HepG2 (cell line): ENCODE measurements at regions of chr10 and their contacts with region 1.

Region 1: GRCh38 chr10:70146489-70147258 is at the start of gene TYSND1:
- DNase-seq: peak; percentile 97
- ATAC-seq: peak; percentile 90
- H3K4me3 ChIP-seq: peak within 1 kb of the TSS; percentile 66 to 92 (median 77)
- H3K27ac ChIP-seq: peak within 1 kb of the TSS; percentile 81
- H3K4me1 ChIP-seq: peaks cover 24% of the 10 kb centered on the region
- H3K27me3 ChIP-seq: no peaks in the 10 kb centered on the region
- CTCF ChIP-seq: peak; percentile 97
- EP300 ChIP-seq: no peak; a peak in 1 of 4 replicates
- POLR2A ChIP-seq: peak; percentile 93 to 96
- RAD21 ChIP-seq: peak; percentile 83
- total RNA-seq, gene TYSND1: 6.8 and 8.9 TPM in 2 replicates

Region 2: GRCh38 chr10:70090013-70090412 is 56.7 kb before region 1 on chr10:
- CTCF ChIA-PET with region 1: interaction called, 6 read pairs
- POLR2A ChIA-PET with region 1: interaction called, 27 read pairs
- in situ Hi-C with region 1: no loop called
- intact Hi-C with region 1: no loop called
- DNase-seq: no peak
- ATAC-seq: no peak
- H3K4me3 ChIP-seq: no peak overlapping the region
- H3K27ac ChIP-seq: peak overlapping the region; percentile 79
- H3K4me1 ChIP-seq: peaks cover 97% of the 10 kb centered on the region
- H3K27me3 ChIP-seq: no peaks in the 10 kb centered on the region
- CTCF ChIP-seq: no peak
- EP300 ChIP-seq: no peak
- POLR2A ChIP-seq: no peak
- RAD21 ChIP-seq: no peak

Region 3: DNA sequence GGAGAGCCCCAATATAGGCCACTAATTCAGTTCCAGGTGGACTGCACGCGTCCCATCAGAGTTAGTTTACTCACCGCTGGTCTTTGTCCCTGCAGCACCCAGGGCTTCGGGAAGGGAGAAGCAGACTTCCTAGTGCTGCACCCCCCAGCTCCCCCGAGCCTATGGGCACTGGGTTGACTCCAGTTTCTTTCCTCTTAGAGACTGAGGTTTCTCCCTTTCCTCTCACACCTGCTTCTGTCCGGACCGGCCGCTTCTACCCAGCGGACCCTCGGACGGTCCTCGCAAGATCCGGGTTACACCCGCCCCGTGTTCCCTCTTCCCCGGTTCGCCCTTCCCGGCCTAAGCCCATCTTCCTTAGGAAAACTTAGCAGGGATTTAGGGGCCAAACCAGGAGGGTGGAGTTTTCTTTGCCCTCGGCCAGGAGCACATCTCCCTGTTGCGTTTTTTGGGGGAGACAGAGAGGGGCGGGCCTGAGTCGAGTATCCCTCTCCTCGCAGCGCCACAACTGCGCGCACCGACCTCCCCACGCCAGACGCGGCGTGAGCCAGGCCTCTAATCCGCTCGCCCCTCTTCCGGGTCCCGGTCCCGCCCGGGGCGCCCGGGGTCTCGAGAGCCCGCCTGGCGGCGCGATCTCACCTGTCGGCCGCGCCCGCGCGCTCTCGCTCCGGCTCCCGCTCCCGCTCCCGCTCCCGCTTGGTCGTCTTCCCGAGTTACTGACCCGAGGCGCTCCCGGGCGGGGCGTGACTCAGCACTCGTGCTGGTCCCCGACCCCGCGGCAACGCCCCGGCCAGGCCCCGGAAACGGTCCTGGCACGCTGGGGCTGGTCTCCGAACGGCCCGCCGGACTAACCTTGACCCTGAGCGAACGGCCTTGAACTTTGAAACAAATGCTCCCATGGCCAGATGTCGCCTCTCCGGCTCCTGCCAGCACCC is 14.3 kb before region 1 on chr10 and contains the start of gene AIFM2:
- CTCF ChIA-PET with region 1: interaction called, 5 read pairs
- POLR2A ChIA-PET with region 1: interaction called, 109 read pairs
- in situ Hi-C with region 1: no loop called
- intact Hi-C with region 1: loop called (anchors 1 kb)
- DNase-seq: peak; percentile 80
- ATAC-seq: peak; percentile 81
- H3K4me3 ChIP-seq: peak within 1 kb of the TSS; percentile 77 to 97 (median 94)
- H3K27ac ChIP-seq: peak within 1 kb of the TSS; percentile 97
- H3K4me1 ChIP-seq: peaks cover 62% of the 10 kb centered on the region
- H3K27me3 ChIP-seq: no peaks in the 10 kb centered on the region; a peak in 1 of 5 replicates
- CTCF ChIP-seq: no peak; the same call in none of the 2 replicates
- EP300 ChIP-seq: peak in 1 of 2 experiments; percentile 78; a peak in 2 of 4 replicates
- POLR2A ChIP-seq: peak; percentile 53 to 71; a peak in 3 of 4 replicates
- RAD21 ChIP-seq: peak; percentile 53
- total RNA-seq, gene AIFM2: 20.3 and 29.6 TPM in 2 replicates

Region 4: DNA sequence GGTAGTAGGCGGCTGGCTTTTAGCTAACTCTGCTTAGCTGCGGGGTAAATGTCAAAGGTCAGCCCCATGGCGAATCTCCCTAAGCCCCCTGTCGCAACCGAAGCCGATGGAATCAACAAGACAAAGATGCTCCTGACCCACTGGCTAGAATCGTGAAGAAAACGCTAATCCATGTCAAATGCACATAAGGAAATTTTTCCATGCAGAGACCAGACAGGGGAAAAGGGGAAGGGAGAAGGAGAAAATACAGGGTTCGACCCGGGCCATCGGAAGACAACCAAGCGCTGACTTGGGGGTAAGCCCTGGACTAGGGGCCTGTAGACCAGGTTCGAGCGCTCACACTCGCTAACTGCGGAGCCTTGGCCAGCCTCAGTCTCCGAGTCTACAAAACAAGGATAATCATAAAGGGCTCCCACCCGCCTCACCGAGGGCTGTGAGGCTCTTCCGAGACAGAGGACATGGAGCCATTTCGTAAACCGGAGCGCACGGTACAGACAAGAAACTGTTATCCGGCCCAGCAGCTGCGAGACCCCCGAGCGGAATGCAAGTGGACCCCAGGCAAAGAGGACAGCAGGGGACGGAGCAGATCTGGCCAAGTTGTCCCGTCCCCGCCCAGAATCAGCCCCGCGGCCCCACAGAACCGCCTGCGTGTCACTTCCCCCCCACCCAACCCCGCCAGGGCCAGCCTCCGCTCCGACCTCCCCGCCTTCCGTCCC is 23.1 kb after region 1 on chr10:
- CTCF ChIA-PET with region 1: no interaction called
- POLR2A ChIA-PET with region 1: interaction called, 84 read pairs
- in situ Hi-C with region 1: no loop called
- intact Hi-C with region 1: no loop called
- DNase-seq: no peak
- ATAC-seq: peak; percentile 5
- H3K4me3 ChIP-seq: peak overlapping the region; percentile 82 to 90 (median 90)
- H3K27ac ChIP-seq: peak overlapping the region; percentile 80
- H3K4me1 ChIP-seq: peaks cover 69% of the 10 kb centered on the region
- H3K27me3 ChIP-seq: no peaks in the 10 kb centered on the region; a peak in 1 of 5 replicates
- CTCF ChIP-seq: no peak
- EP300 ChIP-seq: no peak
- POLR2A ChIP-seq: no peak; a peak in 1 of 4 replicates
- RAD21 ChIP-seq: no peak

Region 5: DNA sequence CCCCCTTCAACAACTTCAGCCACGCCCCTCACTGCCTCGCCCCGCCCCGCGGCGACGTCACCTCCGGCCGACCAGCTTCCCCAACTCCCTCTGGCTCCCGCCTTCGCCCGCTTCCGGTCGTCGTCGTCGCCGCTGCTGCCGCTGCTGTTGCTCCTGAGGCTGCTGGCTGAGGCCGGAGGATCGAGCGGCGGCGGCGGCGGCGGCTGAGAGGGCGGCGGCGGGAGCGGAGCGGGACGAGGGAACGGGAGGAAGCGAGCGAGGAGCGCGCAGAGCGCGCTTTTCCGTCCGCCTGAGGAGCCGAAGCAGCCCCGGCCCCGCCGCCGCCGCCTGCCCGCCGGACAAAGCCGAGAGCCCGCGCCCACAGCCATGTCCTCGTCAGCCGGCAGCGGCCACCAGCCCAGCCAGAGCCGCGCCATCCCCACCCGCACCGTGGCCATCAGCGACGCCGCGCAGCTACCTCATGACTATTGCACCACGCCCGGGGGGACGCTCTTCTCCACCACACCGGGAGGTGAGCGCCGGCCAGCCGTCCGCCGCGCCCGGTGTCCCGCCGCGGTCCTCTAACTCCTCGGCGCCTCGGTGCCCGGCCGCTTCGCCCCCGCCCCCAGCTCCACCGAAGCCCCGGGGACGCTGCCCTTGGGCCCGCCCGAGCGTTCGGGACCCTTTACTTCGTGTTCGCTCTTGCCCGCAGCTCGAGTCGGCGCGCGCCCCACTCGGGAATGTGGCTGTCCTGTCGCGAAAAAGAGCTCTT is 257.5 kb after region 1 on chr10 and contains the start of gene EIF4EBP2:
- CTCF ChIA-PET with region 1: no interaction called
- POLR2A ChIA-PET with region 1: interaction called, 15 read pairs
- in situ Hi-C with region 1: no loop called
- intact Hi-C with region 1: no loop called
- DNase-seq: peak; percentile 84
- ATAC-seq: peak; percentile 80
- H3K4me3 ChIP-seq: peak within 1 kb of the TSS; percentile 90 to 94 (median 92)
- H3K27ac ChIP-seq: peak within 1 kb of the TSS; percentile 82
- H3K4me1 ChIP-seq: peaks cover 49% of the 10 kb centered on the region
- H3K27me3 ChIP-seq: no peaks in the 10 kb centered on the region; a peak in 1 of 5 replicates
- CTCF ChIP-seq: peak; percentile 31; the same call in 1 of the 2 replicates
- EP300 ChIP-seq: no peak
- POLR2A ChIP-seq: peak; percentile 63 to 90
- RAD21 ChIP-seq: peak; percentile 50
- total RNA-seq, gene EIF4EBP2: 22.0 and 38.0 TPM in 2 replicates